Cardiac septum (tissue), 1 donor: ENCODE measurements at regions of chr12 and their contacts with region 1.

Region 1: GRCh38 chr12:94973221-94973620 is 30.3 kb downstream of the NDUFA12 start:
- DNase-seq: no peak

Region 2: DNA sequence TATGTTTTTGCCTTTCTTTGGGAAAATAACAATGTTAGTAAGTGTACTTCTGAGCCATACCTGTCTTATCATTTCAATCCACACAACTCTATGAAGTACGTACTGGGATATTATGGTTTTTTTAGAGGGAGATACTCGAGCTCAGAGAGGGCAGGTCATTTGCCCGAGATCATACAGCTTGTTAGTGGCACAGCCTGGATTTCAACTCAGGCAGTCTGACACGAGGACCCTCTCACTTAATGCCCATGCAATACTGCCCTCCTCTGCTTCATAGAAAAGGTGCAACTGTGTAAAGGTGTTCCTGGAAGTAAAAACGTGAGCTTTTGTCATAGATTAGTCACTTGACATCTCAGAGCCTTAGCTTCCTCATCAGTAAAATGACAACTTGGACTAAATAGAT is 97.7 kb before region 1 on chr12:
- intact Hi-C with region 1: loop called (anchors 10 kb)
- DNase-seq: no peak